PC-9 (cell line): ENCODE measurements at regions of chr17 and their contacts with region 1.

Region 1: DNA sequence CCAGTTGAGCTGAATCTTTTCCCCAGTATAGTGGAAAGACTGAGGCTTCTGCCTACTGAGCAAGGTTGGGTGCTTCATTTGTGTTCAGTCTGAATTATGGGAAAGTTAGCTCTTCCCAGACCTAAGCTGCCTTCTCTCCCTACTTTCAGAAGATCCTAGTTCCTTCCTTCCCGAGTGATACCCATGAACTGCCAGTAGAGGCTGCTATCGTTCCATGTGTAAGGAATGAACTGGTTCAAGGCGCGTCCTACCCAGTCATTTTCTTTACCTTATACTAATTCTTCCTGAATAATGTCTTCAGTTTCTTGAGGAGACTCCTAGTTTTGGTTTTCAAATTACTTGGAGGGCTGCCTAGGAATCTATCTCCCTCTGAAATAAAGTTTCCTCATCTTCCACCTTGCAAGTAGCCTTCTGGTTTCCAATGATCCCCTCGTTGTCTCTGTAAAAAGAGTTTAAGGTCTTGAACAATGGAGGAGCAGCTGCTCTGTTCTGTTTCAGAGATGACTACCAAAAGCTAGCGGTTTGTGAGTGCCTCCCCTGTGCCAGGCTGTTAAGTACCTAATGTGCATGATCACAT is 934 bp upstream of the AOC2 start:
- DNase-seq: peak; percentile 30 to 54
- H3K4me3 ChIP-seq: no peak overlapping the region
- H3K27ac ChIP-seq: no peak overlapping the region
- H3K4me1 ChIP-seq: no peaks in the 10 kb centered on the region
- H3K27me3 ChIP-seq: no peaks in the 10 kb centered on the region
- CTCF ChIP-seq: peak; percentile 90

Region 2: DNA sequence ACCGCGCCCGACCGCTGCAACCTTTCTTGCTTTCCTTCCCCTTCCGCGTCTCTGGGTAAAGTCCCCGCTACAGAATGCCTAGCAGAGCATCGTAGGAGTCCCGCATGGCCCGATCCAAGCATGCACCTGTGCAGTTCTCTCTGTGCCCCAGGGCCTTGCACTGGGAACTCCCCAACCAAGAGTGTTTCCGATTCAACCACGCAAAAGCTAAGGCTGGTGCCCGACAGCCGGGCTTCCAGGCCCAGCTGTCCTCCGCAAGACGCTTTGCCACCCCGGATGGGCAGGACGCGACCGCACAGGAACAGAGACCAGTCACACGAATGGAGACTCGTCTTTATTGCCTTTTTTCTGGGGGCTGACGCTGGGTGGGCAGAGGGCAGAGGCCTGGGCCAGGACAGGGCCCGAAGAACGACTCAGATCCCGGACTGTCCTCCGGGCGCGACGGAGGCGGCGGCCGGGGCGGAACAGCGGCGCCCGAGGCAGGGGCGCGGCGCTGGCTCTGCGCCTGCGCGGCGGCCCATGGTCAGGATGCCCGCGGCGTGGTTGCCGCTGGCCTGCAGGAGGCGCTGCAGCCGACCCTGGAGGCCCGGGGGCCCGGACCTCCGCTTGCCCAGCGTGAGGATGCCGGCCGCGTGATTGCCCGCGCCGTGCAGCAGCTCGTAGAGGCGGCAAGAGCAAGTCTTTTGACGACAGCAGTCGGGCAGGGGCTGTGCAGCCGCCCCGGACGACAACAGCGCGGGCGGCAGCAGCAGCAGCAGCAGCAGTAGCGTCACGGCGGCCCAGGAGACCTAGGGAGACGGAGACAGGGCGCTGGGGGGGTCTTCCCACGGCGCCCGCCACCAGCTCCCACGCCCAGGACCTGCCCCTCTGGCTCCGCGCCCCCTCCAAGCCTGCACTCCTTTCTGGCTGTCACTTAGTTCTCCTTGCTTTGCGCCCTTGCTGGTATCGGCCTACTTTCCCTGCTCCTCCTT is 659.4 kb before region 1 on chr17:
- CTCF ChIA-PET with region 1: no interaction called
- POLR2A ChIA-PET with region 1: interaction called, 17 read pairs
- intact Hi-C with region 1: no loop called
- DNase-seq: peak in 1 of 2 experiments; percentile 37
- H3K4me3 ChIP-seq: no peak overlapping the region; the same call in 1 of the 2 replicates
- H3K27ac ChIP-seq: no peak overlapping the region
- H3K4me1 ChIP-seq: peaks cover 19% of the 10 kb centered on the region; the same call in 1 of the 2 replicates
- H3K27me3 ChIP-seq: peaks cover 10% of the 10 kb centered on the region
- CTCF ChIP-seq: peak; percentile 49; the same call in 1 of the 2 replicates

Region 3: DNA sequence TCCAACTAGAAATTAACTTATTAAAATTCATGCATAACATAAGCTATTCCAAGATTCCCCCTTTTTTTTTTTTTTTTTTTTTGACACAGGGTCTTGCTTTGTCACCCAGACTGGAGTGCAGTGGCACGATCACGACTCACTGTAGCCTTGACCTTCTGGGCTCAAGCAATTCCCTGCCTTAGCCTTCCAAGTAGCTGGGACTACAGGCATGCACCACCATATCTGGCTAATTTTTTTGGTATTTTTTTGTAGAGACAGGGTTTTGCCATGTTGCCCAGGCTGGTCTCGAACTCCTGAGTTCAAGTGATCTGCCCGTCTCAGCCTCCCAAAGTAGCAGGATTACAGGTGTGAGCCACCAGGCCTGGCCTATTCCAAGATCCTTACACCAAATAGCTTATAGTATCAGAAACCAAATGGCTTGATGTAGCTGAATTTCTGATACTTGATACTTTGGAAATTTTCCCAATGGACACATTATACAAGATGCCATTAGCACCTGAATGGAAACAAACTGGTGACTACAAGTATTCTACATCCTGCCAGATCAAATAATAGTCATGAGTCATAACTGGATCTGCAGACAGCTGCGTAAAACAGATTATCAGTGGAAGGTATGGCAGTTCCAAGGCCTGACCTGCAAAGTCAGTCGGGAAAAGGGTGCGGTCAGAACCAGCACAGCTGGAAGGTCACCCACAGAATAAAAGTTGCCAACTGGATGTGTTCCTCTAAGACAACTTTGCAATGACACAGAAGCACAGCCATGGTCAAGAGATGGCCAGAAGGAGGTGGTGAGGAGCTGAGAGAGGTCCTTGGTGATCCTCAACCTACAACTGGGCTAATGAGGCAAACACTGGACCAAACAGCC is 219.5 kb before region 1 on chr17:
- CTCF ChIA-PET with region 1: no interaction called
- POLR2A ChIA-PET with region 1: no interaction called
- intact Hi-C with region 1: no loop called
- DNase-seq: peak; percentile 64 to 92
- H3K4me3 ChIP-seq: no peak overlapping the region
- H3K27ac ChIP-seq: peak overlapping the region; percentile 24; the same call in 1 of the 2 replicates
- H3K4me1 ChIP-seq: peaks cover 22% of the 10 kb centered on the region
- H3K27me3 ChIP-seq: no peaks in the 10 kb centered on the region
- CTCF ChIP-seq: no peak

Region 4: DNA sequence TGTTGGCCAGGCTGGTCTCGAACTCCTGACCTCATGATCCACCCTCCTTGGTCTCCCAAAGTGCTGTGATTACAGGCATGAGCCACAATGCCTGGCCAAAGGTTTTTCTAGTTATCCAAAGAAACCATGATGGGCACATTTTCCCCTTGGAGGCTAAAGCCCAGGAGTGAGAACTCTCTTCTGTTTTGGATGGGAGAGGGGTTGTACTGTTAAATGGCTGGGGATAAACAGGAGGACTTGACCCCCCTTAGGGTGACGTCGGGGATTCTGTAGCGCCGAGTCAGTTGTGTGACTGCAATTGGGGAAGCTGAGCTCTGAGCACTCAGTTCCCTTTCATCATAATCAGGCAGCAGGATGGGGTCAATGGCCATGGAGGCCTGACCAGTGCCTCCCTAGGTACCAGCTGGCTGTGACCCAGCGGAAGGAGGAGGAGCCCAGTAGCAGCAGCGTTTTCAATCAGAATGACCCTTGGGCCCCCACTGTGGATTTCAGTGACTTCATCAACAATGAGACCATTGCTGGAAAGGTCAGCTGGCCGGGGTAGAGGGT is 11.7 kb after region 1 on chr17:
- CTCF ChIA-PET with region 1: no interaction called
- POLR2A ChIA-PET with region 1: interaction called, 11 read pairs
- intact Hi-C with region 1: no loop called
- DNase-seq: no peak
- H3K4me3 ChIP-seq: no peak overlapping the region
- H3K27ac ChIP-seq: no peak overlapping the region
- H3K4me1 ChIP-seq: no peaks in the 10 kb centered on the region
- H3K27me3 ChIP-seq: no peaks in the 10 kb centered on the region
- CTCF ChIP-seq: no peak

Region 5: GRCh38 chr17:42928714-42929496 is 85.5 kb after region 1 on chr17:
- CTCF ChIA-PET with region 1: interaction called, 10 read pairs
- POLR2A ChIA-PET with region 1: interaction called, 3 read pairs
- intact Hi-C with region 1: loop called (anchors 2 kb)
- DNase-seq: peak; percentile 57 to 72
- H3K4me3 ChIP-seq: no peak overlapping the region
- H3K27ac ChIP-seq: peak overlapping the region; percentile 59
- H3K4me1 ChIP-seq: peaks cover 8% of the 10 kb centered on the region
- H3K27me3 ChIP-seq: no peaks in the 10 kb centered on the region
- CTCF ChIP-seq: peak; percentile 65

Region 6: GRCh38 chr17:42937712-42938596 is 94.5 kb after region 1 on chr17:
- CTCF ChIA-PET with region 1: interaction called, 8 read pairs
- POLR2A ChIA-PET with region 1: no interaction called
- intact Hi-C with region 1: loop called (anchors 1 kb)
- DNase-seq: peak in 1 of 2 experiments; percentile 42
- H3K4me3 ChIP-seq: no peak overlapping the region
- H3K27ac ChIP-seq: no peak overlapping the region
- H3K4me1 ChIP-seq: no peaks in the 10 kb centered on the region
- H3K27me3 ChIP-seq: no peaks in the 10 kb centered on the region
- CTCF ChIP-seq: peak; percentile 79

Region 7: GRCh38 chr17:42997984-42998938 is 154.8 kb after region 1 on chr17 and contains the start of gene RPL27:
- CTCF ChIA-PET with region 1: no interaction called
- POLR2A ChIA-PET with region 1: interaction called, 4 read pairs
- intact Hi-C with region 1: loop called (anchors 1 kb)
- DNase-seq: peak; percentile 93 to 99
- H3K4me3 ChIP-seq: peak within 1 kb of the TSS; percentile 91
- H3K27ac ChIP-seq: peak within 1 kb of the TSS; percentile 97
- H3K4me1 ChIP-seq: peaks cover 33% of the 10 kb centered on the region
- H3K27me3 ChIP-seq: no peaks in the 10 kb centered on the region
- CTCF ChIP-seq: peak; percentile 85
- total RNA-seq, gene RPL27: 593 and 950 TPM in 2 replicates